Esophagus muscularis mucosa (tissue), 4 donors: ENCODE measurements at regions of chr16 and their contacts with region 1.

Region 1: DNA sequence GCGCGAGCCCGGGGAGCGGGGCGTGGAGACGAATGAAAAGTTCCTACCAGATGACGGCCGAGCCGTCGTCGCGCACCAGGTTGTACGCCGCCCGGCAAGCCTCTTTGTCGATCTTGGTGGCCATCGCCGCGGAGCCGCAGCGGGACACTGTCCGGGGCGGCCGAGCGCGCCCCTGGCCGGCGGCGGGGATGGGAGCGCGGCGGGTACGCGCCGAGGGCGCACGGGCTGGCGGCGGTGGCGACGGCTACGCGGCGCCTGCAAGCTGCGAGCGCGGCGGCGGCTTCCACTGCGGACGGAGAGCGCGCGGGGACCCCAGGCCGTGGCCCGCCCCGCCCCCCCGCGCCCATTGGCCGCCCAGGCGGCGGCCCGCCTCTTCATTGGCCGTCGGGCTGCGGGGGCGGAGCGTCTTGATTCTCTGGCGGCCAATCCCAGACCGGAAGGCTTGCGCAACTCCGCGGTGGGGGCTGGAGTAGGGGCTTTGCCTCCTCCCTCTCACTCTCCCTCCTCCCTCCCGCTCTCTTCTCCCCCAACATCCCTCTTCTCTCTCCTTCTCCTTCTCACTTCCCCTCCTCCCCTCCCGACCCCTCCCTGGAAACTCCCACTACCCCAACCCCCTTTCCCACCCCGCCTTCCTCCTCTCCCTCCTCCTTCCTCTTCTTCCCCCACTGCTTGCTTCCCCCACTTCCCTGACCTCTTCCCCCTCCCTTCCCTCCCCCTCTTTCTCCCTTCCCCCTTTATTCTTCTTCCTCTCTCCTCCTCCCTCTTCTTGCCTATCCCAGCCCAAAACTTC is at the start of gene COTL1:
- DNase-seq: peak; percentile 98
- H3K4me3 ChIP-seq: peak within 1 kb of the TSS; percentile 67 to 81 (median 74)
- H3K27ac ChIP-seq: peak within 1 kb of the TSS; percentile 69 to 83 (median 78)
- H3K4me1 ChIP-seq: peaks cover 20 to 59% (median 52%) of the 10 kb centered on the region in 4 donors
- H3K27me3 ChIP-seq: peaks cover 0 to 9% (median 0%) of the 10 kb centered on the region in 4 donors
- CTCF ChIP-seq: no peak
- EP300 ChIP-seq: no peak
- POLR2A ChIP-seq: no peak
- total RNA-seq, gene COTL1: 34.5 to 42.9 (median 40.7) TPM

Region 2: GRCh38 chr16:84511180-84511824 is 106.7 kb before region 1 on chr16:
- intact Hi-C with region 1: loop called (anchors 1 kb)
- DNase-seq: peak; percentile 96
- H3K4me3 ChIP-seq: peak overlapping the region in 2 of 4 donors; percentile 5 to 23
- H3K27ac ChIP-seq: no peak overlapping the region
- H3K4me1 ChIP-seq: peaks cover 0 to 15% (median 11%) of the 10 kb centered on the region in 4 donors
- H3K27me3 ChIP-seq: no peaks in the 10 kb centered on the region
- CTCF ChIP-seq: peak; percentile 96 to 97 (median 97)
- EP300 ChIP-seq: no peak
- POLR2A ChIP-seq: no peak

Region 3: DNA sequence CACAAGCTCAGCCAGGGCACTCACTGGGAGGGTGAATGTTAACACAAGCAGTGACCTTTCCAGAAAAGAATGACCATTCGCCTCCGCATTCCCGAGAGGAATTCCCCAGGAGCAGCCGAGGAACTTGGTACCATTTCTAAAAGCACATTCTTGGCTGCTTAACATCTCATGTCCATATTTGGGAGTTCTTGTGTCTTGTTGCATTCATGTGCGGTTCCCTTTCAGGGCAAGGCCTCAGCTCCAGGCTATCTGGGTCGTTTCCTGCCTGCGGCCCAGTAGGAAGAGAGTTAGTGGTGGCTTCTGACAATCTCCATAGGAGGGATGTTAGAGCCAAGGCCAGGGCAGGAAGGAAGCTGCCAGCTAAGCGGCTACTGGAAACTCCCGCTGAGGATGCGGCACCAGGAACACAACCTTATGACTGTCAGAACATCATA is 85.7 kb before region 1 on chr16:
- intact Hi-C with region 1: loop called (anchors 5 kb)
- DNase-seq: no peak
- H3K4me3 ChIP-seq: no peak overlapping the region
- H3K27ac ChIP-seq: peak overlapping the region; percentile 80 to 87 (median 84)
- H3K4me1 ChIP-seq: peaks cover 30 to 41% (median 37%) of the 10 kb centered on the region in 4 donors
- H3K27me3 ChIP-seq: no peaks in the 10 kb centered on the region
- CTCF ChIP-seq: no peak
- EP300 ChIP-seq: peak; percentile 30
- POLR2A ChIP-seq: no peak

Region 4: GRCh38 chr16:84714028-84714427 is 96.0 kb after region 1 on chr16:
- intact Hi-C with region 1: no loop called
- DNase-seq: peak; percentile 78
- H3K4me3 ChIP-seq: no peak overlapping the region
- H3K27ac ChIP-seq: no peak overlapping the region
- H3K4me1 ChIP-seq: peaks cover 28 to 58% (median 36%) of the 10 kb centered on the region in 4 donors
- H3K27me3 ChIP-seq: no peaks in the 10 kb centered on the region
- CTCF ChIP-seq: no peak
- EP300 ChIP-seq: no peak
- POLR2A ChIP-seq: no peak

Region 5: GRCh38 chr16:84726079-84726668 is 108.2 kb after region 1 on chr16:
- intact Hi-C with region 1: loop called (anchors 2 kb)
- DNase-seq: peak; percentile 97
- H3K4me3 ChIP-seq: peak overlapping the region; percentile 0 to 19 (median 6)
- H3K27ac ChIP-seq: peak overlapping the region; percentile 38 to 66 (median 57)
- H3K4me1 ChIP-seq: peaks cover 47 to 73% (median 64%) of the 10 kb centered on the region in 4 donors
- H3K27me3 ChIP-seq: no peaks in the 10 kb centered on the region
- CTCF ChIP-seq: peak; percentile 89 to 94 (median 92)
- EP300 ChIP-seq: no peak
- POLR2A ChIP-seq: no peak

Region 6: GRCh38 chr16:84829168-84829965 is 211.4 kb after region 1 on chr16:
- intact Hi-C with region 1: no loop called
- DNase-seq: no peak
- H3K4me3 ChIP-seq: no peak overlapping the region
- H3K27ac ChIP-seq: peak overlapping the region; percentile 94 to 97 (median 96)
- H3K4me1 ChIP-seq: peaks cover 46 to 100% (median 97%) of the 10 kb centered on the region in 4 donors
- H3K27me3 ChIP-seq: no peaks in the 10 kb centered on the region
- CTCF ChIP-seq: no peak
- EP300 ChIP-seq: peak; percentile 99
- POLR2A ChIP-seq: no peak